Panc1 (cell line): ENCODE measurements at regions of chr17 and their contacts with region 1.

Region 1: GRCh38 chr17:48131216-48131824 is 23.8 kb downstream of the SNX11 start:
- DNase-seq: peak; percentile 53
- ATAC-seq: peak; percentile 92
- H3K4me3 ChIP-seq: no peak overlapping the region
- H3K27ac ChIP-seq: no peak overlapping the region
- H3K4me1 ChIP-seq: peaks cover 13% of the 10 kb centered on the region
- H3K27me3 ChIP-seq: no peaks in the 10 kb centered on the region
- CTCF ChIP-seq: peak; percentile 89

Region 2: DNA sequence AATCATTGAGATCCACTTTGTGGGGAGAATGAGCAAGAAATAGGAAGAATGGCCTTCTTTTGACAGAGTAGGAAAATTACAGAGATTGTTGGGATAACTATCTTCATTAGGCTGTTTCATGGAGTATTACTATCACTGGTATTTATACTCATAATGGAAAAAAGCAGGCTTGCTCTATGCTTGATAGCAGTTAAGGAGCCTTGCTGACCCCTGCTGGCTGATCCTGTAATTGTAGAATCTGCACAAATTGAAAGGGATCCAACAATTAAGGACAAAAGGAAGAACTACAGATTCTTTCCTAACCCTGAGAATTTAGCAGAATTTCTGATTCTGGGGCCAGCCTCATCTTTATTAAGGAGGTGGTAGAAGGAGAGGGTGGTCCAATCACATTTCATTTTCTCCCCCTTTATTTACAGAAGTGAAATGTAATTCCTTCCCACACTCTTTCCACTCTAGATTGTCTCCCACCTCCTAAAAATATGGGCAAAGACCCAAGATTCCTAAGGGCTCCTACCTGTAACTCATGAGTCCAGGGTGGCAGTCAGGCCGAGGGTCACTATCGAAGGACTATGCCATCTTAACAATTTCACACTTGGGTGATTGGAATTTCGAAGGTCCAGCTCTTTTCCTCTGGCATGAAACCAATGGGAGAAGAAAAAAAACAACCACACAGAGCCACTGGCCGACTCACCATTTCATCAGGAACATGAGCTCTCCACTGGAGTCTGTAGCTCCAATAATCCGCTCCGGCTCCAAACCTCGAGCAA is 56.8 kb before region 1 on chr17:
- CTCF ChIA-PET with region 1: interaction called, 17 read pairs
- POLR2A ChIA-PET with region 1: no interaction called
- in situ Hi-C with region 1: no loop called
- intact Hi-C with region 1: no loop called
- DNase-seq: peak; percentile 53
- ATAC-seq: peak; percentile 82
- H3K4me3 ChIP-seq: no peak overlapping the region
- H3K27ac ChIP-seq: peak overlapping the region; percentile 32; the same call in 1 of the 2 replicates
- H3K4me1 ChIP-seq: peaks cover 5% of the 10 kb centered on the region; the same call in 1 of the 2 replicates
- H3K27me3 ChIP-seq: no peaks in the 10 kb centered on the region
- CTCF ChIP-seq: peak; percentile 85

Region 3: GRCh38 chr17:48084932-48085444 is 46.3 kb before region 1 on chr17:
- CTCF ChIA-PET with region 1: interaction called, 6 read pairs
- POLR2A ChIA-PET with region 1: no interaction called
- in situ Hi-C with region 1: no loop called
- intact Hi-C with region 1: loop called (anchors 5 kb)
- DNase-seq: no peak
- ATAC-seq: no peak
- H3K4me3 ChIP-seq: no peak overlapping the region
- H3K27ac ChIP-seq: no peak overlapping the region
- H3K4me1 ChIP-seq: peaks cover 14% of the 10 kb centered on the region; the same call in 1 of the 2 replicates
- H3K27me3 ChIP-seq: no peaks in the 10 kb centered on the region
- CTCF ChIP-seq: no peak

Region 4: GRCh38 chr17:48093341-48094045 is 37.8 kb before region 1 on chr17:
- CTCF ChIA-PET with region 1: interaction called, 4 read pairs
- POLR2A ChIA-PET with region 1: no interaction called
- in situ Hi-C with region 1: no loop called
- intact Hi-C with region 1: loop called (anchors 1 kb)
- DNase-seq: no peak
- ATAC-seq: no peak
- H3K4me3 ChIP-seq: no peak overlapping the region
- H3K27ac ChIP-seq: no peak overlapping the region
- H3K4me1 ChIP-seq: peaks cover 8% of the 10 kb centered on the region
- H3K27me3 ChIP-seq: no peaks in the 10 kb centered on the region
- CTCF ChIP-seq: no peak